ENCODE measurements at regions of chr9 and their contacts with region 1.

Region 1: DNA sequence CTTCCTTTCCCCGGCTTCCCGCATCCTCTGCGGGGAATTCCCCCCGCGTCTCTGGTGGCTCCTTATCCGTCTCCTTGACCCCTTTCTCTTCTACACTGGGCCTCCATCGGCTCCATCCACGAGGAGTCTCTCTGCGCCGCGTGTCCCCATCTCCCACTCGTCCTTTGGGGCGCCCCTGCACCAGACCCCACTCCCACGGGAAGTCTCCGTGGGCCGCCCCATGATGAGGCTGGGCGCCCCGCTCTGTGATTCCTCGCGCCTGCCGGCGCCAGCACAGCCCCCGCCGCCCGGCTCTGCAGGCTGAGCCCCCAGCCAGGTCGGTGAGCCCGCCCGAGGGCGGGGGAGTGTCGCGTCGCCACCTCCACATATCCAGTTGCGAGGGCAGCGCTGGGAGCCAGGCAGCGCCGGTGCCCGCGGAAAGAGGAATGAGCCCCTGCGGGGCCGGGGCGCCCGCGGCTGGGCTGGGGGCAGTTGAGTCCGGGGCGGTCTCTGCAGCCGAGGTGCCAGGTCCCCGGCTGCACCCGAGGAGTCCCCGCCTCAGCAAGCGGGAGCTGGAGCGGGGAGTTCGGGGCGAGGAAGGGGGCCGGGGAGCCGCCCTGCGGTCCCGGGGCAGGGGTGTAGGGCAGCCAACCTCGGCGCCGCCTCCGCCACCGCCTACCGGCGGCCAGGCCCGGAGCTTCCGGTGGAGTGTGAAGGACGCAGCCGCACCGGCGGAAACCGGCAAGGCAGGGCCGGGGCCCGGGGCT is 2.1 kb upstream of the TRAF1 start:
- DNase-seq: peak; percentile 85
- ATAC-seq: peak; percentile 16
- H3K4me3 Mint-ChIP-seq: peak overlapping the region; percentile 90
- H3K27ac Mint-ChIP-seq: peak overlapping the region; percentile 90
- H3K4me1 Mint-ChIP-seq: peaks cover 75% of the 10 kb centered on the region
- H3K27me3 Mint-ChIP-seq: no peaks in the 10 kb centered on the region

Region 2: DNA sequence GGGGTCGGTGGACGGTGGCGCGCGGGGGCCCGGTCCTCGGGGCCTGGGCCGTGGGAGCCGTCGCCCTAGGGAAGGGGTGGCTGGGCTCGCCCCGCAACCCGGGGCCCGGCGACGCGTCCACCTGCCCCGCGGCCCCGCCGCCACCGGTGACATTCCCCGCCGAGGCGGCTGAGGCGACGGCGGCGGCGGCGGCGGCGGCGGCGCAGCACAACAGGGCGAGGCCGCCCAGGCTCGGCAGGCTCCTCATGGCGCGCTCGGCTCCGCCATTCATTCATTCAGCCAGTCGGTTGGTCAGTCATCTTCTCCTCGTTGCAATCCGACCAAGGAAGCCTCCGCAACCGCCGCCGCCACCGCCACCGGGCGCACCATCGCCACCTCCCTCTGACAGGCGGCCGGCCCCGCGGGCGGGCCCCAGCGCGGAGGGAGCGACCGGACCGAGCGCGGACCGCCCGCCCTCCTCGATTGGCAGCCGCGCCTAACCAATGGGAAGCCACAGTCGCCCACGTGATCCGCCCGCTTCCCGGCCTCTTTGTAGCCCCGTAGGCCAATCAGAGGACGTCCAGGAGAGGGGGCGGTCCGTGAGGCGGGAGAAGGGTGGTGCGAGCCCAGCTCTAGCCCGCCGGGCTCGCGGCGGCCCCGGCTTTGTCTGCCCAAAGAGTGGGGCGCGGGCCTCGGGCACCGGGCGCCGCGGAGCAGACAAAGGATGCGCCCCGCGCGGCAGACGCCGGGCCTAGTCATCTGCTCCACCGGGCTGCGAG is 214.4 kb before region 1 on chr9 and contains the start of gene MEGF9:
- CTCF ChIA-PET with region 1: no interaction called
- POLR2A ChIA-PET with region 1: interaction called, 3 read pairs
- intact Hi-C with region 1: loop called (anchors 2 to 5 kb)
- DNase-seq: peak; percentile 99
- ATAC-seq: peak; percentile 98
- H3K4me3 Mint-ChIP-seq: peak within 1 kb of the TSS; percentile 84
- H3K27ac Mint-ChIP-seq: peak within 1 kb of the TSS; percentile 74
- H3K4me1 Mint-ChIP-seq: peaks cover 34% of the 10 kb centered on the region
- H3K27me3 Mint-ChIP-seq: no peaks in the 10 kb centered on the region
- total RNA-seq, gene MEGF9: 3.3 to 3.6 TPM

Region 3: DNA sequence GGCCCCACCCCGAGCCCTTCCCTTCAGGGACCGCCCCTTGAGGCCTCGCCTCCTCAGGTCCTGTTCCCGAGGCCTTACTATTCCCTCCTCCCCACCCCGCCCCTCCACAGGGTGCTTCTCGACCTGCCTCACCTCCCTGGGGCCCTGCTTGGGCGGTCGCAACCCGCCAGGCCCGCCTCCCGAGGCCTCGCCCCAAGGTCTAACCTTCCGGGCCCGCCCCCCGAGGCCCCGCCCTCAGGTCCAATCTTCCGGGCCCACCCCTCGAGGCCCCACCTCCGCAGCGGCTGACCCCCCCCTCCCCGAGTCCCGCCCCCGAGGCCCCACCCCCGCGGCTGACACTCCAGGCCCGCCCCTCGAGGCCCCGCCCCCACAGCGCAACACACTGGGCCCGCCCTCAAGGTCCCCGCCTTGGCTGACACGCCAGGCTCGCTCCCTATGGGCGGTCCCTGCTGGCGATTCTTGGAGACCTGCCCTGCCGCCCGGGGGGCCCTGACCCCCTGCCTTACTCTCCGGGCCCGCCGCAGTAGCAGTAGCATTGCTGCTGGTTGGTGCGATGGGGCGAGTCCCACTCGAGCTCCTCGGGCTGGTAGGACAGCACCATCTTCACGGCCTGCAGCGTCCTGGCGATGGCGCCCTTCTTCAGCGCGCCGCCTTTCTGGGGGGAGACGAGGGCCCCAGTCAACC is 59.8 kb before region 1 on chr9:
- CTCF ChIA-PET with region 1: interaction called, 7 read pairs
- POLR2A ChIA-PET with region 1: interaction called, 9 read pairs
- intact Hi-C with region 1: loop called in 1 of 2 experiments (anchors 1 kb)
- DNase-seq: peak; percentile 99
- ATAC-seq: peak; percentile 94
- H3K4me3 Mint-ChIP-seq: peak overlapping the region; percentile 64
- H3K27ac Mint-ChIP-seq: peak overlapping the region; percentile 70
- H3K4me1 Mint-ChIP-seq: peaks cover 40% of the 10 kb centered on the region
- H3K27me3 Mint-ChIP-seq: no peaks in the 10 kb centered on the region

Region 4: DNA sequence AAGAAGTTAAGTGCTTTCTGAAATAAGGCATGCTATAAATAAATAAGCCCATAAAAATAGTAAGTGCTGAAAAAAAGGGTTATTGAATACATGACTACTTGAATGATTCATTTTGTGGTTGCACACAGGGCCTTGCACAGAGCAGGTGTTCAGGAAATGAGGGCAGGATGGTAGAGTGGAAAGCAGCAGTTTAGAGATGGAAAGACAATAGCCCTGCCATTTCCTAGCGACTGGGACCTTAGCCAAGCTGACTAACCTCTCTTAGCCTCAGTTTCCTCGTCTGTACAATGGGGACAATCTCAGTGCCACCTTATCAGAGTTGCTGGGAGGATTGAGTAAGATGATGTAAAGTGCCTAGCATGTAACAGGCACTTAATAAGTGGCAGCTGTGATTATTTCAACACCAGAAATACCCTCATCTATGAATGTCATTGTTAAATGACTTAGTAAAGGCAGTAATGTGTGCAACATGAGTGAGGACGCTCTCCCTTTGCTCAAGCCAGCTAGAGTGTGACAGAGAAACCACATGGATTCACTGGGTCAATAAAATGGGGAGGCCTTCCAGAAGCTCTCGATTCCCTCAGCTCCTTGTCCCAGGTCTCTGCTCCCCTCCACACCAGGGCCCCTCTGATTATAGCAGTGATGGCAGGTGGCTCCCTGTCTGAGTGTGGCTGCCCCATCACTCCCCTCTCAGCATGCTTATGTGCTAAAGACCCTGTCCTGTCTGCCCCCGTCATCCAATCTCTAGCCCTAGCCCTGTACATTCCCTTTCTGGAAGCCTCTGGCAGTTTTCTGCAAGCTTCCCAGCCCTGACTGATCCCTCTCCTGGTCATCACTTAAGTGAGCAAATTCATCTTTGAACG is 35.7 kb before region 1 on chr9:
- CTCF ChIA-PET with region 1: interaction called, 4 read pairs
- POLR2A ChIA-PET with region 1: interaction called, 13 read pairs
- intact Hi-C with region 1: loop called (anchors 1 to 2 kb)
- DNase-seq: peak; percentile 78
- ATAC-seq: peak; percentile 46
- H3K4me3 Mint-ChIP-seq: peak overlapping the region; percentile 67
- H3K27ac Mint-ChIP-seq: peak overlapping the region; percentile 100
- H3K4me1 Mint-ChIP-seq: peaks cover 89% of the 10 kb centered on the region
- H3K27me3 Mint-ChIP-seq: no peaks in the 10 kb centered on the region

Region 5: DNA sequence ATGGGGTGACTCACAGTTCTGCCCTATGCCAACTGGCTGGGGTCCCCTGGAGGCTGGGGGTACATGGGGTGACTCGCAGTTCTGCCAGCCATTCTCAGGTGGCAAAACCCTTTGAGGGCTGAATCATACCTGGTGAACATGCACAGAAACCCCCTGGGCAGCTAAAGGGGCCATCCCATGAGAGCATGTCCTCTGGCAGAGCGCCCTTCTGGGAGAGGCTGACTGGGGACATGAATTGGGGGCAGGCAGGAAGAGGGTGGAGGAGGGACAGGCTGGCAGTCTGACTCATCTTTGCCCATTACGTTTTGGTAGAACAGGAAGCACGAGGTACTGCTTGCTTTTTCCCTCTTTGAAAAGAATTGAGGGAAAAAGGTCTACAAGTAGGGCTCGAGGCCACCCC is 18.8 kb before region 1 on chr9:
- CTCF ChIA-PET with region 1: interaction called, 3 read pairs
- POLR2A ChIA-PET with region 1: interaction called, 13 read pairs
- intact Hi-C with region 1: loop called (anchors 1 kb)
- DNase-seq: peak; percentile 77
- ATAC-seq: peak; percentile 63
- H3K4me3 Mint-ChIP-seq: no peak overlapping the region
- H3K27ac Mint-ChIP-seq: peak overlapping the region; percentile 92
- H3K4me1 Mint-ChIP-seq: peaks cover 94% of the 10 kb centered on the region
- H3K27me3 Mint-ChIP-seq: no peaks in the 10 kb centered on the region

Region 6: GRCh38 chr9:121074635-121075385 is 146.2 kb after region 1 on chr9 and contains the start of gene CNTRL:
- CTCF ChIA-PET with region 1: interaction called, 4 read pairs
- POLR2A ChIA-PET with region 1: no interaction called
- intact Hi-C with region 1: loop called (anchors 1 to 5 kb)
- DNase-seq: peak; percentile 98
- ATAC-seq: peak; percentile 89
- H3K4me3 Mint-ChIP-seq: peak within 1 kb of the TSS; percentile 96
- H3K27ac Mint-ChIP-seq: peak within 1 kb of the TSS; percentile 82
- H3K4me1 Mint-ChIP-seq: peaks cover 45% of the 10 kb centered on the region
- H3K27me3 Mint-ChIP-seq: no peaks in the 10 kb centered on the region
- total RNA-seq, gene CNTRL: 64.1 to 72.2 TPM

Region 7: DNA sequence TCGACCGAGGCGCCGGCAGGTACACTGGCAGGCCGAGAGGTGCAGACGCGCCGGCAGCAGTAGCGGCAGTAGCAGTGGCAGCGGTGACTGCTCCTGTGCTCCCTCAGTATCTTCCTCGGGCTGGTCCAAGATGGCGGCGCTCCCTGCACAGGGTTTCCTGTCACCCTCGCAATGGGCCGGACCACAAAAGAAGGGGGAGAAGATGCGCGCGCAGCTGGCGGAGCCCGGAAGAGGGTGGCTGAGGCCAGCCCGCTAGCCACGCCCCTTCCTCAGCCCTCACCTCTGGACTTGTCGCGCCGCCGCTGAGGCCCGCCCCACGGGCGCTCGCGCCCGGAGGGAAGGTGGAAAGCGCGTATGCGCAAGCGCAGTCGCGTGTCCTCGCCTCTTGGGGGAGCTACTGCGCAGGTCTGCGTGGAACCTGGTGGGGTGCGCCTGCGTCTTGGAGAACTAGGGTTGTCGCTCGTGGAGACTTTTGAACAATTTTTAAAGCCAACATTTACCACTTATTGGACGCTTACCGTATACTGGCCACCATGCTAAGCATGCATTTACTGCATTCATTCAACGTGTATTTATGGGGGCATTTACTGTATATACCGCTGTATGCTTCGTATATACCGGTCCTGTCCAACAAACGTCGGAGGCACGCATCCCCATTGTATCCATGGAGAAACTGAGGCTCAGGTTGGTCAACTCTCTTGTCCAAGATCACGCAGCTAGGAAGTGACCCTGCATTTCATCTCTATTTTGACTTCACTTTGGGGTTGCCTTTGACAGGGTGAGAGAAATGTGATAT is 273.3 kb after region 1 on chr9 and contains the start of gene RAB14:
- CTCF ChIA-PET with region 1: no interaction called
- POLR2A ChIA-PET with region 1: no interaction called
- intact Hi-C with region 1: loop called in 1 of 2 experiments (anchors 2 kb)
- DNase-seq: peak; percentile 100
- ATAC-seq: peak; percentile 92
- H3K4me3 Mint-ChIP-seq: peak within 1 kb of the TSS; percentile 93
- H3K27ac Mint-ChIP-seq: peak within 1 kb of the TSS; percentile 93
- H3K4me1 Mint-ChIP-seq: peaks cover 38% of the 10 kb centered on the region
- H3K27me3 Mint-ChIP-seq: no peaks in the 10 kb centered on the region
- total RNA-seq, gene RAB14: 52.3 to 54.7 TPM

Measured in activated CD4-positive, alpha-beta T cell treated with anti-CD3 and anti-CD28 coated beads for 36 hours (primary cell).